Right ventricle myocardium inferior (tissue), 1 donor: ENCODE measurements at regions of chr1 and their contacts with region 1.

Region 1: GRCh38 chr1:225845571-225846259 is 35.8 kb downstream of the EPHX1 start:
- DNase-seq: peak; percentile 86
- ATAC-seq: peak; percentile 83

Region 2: DNA sequence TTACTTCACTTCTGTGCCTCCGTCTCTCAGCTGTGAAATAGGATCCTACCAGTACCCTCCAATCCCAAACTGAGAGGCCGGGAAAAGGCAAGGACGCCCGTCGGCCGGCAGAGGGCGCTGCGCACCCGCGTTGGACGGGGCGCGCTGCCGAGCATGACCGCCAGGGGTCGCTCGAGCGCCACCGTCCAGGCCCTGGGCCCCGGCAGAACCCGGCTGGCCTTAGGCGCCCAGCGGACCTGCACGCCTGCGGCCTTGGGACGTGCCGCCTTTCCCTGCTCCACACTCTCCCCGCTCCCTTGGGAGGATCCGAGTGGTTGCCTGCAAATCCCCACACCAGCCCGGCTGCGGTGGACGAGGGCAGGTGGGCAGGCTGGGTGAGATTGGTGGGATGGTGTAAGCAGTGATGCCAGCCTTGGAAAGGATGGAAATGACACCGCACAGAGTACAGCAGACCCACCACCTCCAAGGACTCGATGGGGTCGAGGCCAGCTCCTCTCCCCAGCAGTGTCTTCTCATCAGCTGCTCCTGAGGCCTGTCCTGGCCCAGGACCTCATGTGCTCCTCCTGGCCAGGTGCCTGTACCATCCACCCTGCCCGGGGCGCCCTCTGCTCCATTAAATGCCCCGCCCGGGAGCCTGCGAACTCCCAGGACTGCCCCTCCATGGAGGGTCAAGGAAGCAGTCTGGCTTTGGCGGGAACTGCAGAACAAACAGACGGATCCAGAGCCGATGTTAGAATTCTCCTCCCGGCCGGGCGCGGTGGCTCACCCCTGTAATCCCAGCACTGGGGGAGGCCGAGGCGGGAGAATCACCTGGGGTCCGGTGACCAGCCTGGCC is 370.5 kb before region 1 on chr1:
- intact Hi-C with region 1: loop called (anchors 2 kb)
- DNase-seq: peak; percentile 91
- ATAC-seq: peak; percentile 90

Region 3: DNA sequence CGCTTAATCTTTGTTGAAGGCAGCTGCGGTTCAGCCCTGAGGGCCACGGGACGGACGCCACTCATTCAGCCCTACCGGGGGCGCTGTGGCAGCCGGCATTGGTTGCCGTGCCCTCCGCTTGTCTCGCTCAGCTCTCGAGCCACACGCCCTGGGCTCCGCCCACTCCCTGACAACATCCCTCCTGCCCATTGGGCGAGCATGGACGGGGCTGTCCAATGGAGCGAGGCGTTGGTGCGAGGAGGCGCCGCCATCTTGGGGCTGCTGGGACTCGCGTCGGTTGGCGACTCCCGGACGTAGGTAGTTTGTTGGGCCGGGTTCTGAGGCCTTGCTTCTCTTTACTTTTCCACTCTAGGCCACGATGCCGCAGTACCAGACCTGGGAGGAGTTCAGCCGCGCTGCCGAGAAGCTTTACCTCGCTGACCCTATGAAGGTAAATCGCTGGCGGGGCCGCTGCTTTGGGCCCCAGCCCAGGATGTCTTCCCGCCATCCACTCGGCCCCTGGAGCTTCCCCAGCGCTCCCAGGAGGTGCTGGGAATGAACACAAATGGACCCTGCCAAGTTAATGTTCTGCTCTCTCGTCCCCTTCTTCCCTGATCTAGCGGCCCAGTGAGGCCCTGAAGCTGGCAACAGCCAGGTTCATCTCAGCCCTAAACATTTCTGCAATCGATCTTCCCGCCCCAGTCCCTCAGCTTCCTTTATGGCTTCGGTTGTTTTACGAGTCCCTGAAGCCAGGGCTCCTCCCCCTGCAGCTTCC is 68.0 kb before region 1 on chr1 and contains the start of gene SRP9:
- intact Hi-C with region 1: loop called (anchors 2 kb)
- DNase-seq: peak; percentile 99
- ATAC-seq: peak; percentile 100
- total RNA-seq, gene SRP9: 192 TPM

Region 4: GRCh38 chr1:225809842-225810578 is 35.7 kb before region 1 on chr1 and contains the start of gene EPHX1:
- intact Hi-C with region 1: loop called (anchors 2 kb)
- DNase-seq: peak; percentile 94
- ATAC-seq: peak; percentile 91
- total RNA-seq, gene EPHX1: 76.0 TPM